Right cardiac atrium (tissue), 5 donors: ENCODE measurements at regions of chr6 and their contacts with region 1.

Region 1: GRCh38 chr6:163745536-163746400 is 331.2 kb downstream of the QKI start:
- DNase-seq: peak; percentile 49 to 81 (median 65)
- ATAC-seq: peak; percentile 87 to 91
- H3K4me3 ChIP-seq: no peak overlapping the region
- H3K27ac ChIP-seq: peak overlapping the region; percentile 34
- H3K4me1 ChIP-seq: peaks cover 7% of the 10 kb centered on the region
- H3K27me3 ChIP-seq: no peaks in the 10 kb centered on the region

Region 2: GRCh38 chr6:163387317-163387716 is 358.5 kb before region 1 on chr6:
- intact Hi-C with region 1: no loop called
- DNase-seq: no peak
- ATAC-seq: peak in 1 of 2 donors; percentile 43
- H3K4me3 ChIP-seq: no peak overlapping the region
- H3K27ac ChIP-seq: no peak overlapping the region
- H3K4me1 ChIP-seq: peaks cover 4% of the 10 kb centered on the region
- H3K27me3 ChIP-seq: no peaks in the 10 kb centered on the region

Region 3: DNA sequence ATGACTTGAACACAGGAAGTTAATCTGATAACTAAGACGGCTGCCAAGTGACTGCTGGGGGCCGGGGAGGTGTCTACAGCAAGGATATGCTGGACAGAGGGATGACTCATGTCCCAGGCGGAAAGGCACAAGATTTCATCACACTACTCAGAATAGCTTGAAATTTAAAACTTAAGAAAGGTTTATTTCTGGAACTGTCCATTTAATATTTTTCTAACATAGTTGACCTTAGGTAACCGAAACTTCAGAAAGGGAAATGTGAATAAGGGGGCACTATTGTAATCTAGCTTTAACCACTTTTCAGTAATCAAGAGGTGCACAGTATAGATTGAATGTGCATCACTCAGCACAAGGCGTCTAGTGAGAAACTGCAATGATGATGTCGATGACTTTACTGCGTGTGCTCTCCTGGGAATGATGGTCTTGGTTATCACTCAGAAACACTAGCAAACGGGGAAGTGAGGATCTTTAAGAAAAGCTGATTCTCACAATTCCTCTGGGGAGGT is 159.8 kb before region 1 on chr6:
- intact Hi-C with region 1: loop called in 1 of 4 experiments (anchors 10 kb)
- DNase-seq: peak in 2 of 3 donors; percentile 70 to 76
- ATAC-seq: peak; percentile 82 to 94
- H3K4me3 ChIP-seq: no peak overlapping the region
- H3K27ac ChIP-seq: peak overlapping the region; percentile 9
- H3K4me1 ChIP-seq: peaks cover 2% of the 10 kb centered on the region
- H3K27me3 ChIP-seq: no peaks in the 10 kb centered on the region

Region 4: DNA sequence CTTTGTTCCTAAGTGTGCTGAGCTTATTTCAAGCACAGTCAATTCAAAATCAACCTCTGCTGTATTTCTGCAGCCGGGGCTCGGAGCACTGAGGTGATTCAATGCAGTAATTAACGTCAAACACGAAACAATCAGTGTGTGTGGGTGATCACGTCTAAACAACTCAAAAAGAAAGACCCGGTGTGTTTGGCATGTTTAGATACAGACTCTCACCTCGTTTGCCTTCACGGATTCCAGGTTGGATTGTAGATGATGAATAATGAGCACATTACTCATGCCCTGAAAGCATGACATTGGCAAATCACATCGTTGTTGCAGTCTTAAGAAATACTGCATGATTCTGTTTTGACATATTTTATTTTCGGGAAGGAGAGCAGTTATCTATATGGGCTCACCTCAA is 100.2 kb before region 1 on chr6:
- intact Hi-C with region 1: no loop called
- DNase-seq: no peak
- ATAC-seq: no peak
- H3K4me3 ChIP-seq: no peak overlapping the region
- H3K27ac ChIP-seq: no peak overlapping the region
- H3K4me1 ChIP-seq: no peaks in the 10 kb centered on the region
- H3K27me3 ChIP-seq: no peaks in the 10 kb centered on the region

Region 5: DNA sequence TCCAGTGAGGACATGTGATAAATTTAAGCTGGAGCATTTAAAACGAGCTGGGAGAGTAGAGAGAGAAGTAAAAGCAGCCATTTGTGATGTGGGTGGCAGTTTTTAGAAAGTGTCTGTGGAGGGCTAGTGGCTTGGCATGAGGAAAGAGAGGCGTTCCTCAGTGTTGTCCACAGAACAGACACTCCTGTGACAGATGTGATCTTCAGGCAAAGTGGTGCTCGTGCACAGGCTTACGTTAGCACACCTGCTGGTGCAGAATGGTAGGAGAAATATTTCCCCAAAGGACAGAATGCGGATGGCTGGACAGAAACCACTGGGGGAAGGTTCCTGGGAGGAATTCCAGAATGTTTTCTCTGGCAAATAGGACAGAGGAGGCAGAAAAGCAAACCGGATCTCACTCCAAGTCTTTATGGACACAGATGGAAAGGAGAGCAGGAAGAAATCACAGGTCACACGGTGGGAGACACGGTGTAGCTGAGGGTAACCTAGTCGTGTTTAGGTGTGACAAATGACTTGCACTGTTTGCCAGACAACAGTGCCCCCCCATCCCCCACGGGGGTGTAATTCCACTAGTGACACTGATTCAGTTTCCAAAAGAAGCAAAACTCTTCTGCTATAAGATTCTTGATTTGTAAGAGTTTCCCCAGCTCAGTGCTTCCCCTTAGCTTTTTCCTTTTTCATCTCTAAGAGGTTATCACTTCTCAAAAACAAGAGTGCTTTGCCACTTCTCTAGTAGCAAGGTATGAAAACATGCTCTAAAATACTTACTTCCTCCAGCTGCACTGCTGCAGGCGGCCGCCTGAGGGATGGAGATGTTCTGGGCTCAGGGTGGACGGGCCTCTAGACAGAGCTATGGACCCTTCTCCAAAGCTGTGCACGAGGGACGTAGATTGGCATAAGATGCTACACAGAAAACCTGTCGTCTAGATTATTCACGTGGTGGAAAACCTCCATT is 38.1 kb before region 1 on chr6:
- intact Hi-C with region 1: no loop called
- DNase-seq: peak in 1 of 3 donors; percentile 58
- ATAC-seq: no peak
- H3K4me3 ChIP-seq: no peak overlapping the region
- H3K27ac ChIP-seq: peak overlapping the region; percentile 48
- H3K4me1 ChIP-seq: peaks cover 32% of the 10 kb centered on the region
- H3K27me3 ChIP-seq: no peaks in the 10 kb centered on the region

Region 6: GRCh38 chr6:163837691-163838431 is 92.1 kb after region 1 on chr6:
- intact Hi-C with region 1: no loop called
- DNase-seq: peak; percentile 28 to 60 (median 56)
- ATAC-seq: peak; percentile 78 to 83
- H3K4me3 ChIP-seq: no peak overlapping the region
- H3K27ac ChIP-seq: peak overlapping the region; percentile 38
- H3K4me1 ChIP-seq: peaks cover 2% of the 10 kb centered on the region
- H3K27me3 ChIP-seq: no peaks in the 10 kb centered on the region